Activated CD4-positive, alpha-beta T cell treated with anti-CD3 and anti-CD28 coated beads, Interleukin-2, amount 10 ng/mL, durations not matched to agents 24 days and 14 days (primary cell): ENCODE measurements at regions of chr3 and their contacts with region 1.

Region 1: DNA sequence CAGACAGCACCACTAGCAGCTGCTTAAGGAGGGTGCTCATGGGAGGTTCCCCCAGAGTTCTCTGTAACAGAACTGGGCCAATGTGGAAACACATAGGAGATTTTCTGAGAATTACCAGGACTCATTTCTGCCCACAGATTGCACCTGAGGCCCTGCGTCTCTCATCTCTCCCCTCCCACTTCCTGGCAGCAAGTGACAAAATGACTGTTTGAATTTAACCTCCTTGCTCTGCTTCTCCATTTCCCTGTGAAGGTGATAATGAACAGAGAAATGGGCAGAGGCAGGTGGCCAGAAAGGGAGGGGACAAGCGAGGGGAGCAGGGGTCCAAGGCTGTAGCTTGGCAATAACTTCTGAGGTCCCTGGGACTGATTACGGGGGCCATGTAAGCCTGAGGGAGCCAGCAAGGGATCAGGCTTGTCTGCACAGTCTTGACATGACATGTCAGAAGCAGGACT is 8.0 kb downstream of the EPHB1 start:
- DNase-seq: peak; percentile 85
- H3K4me3 Mint-ChIP-seq: peak overlapping the region; percentile 32
- H3K27ac Mint-ChIP-seq: peak overlapping the region; percentile 30
- H3K4me1 Mint-ChIP-seq: peaks cover 28% of the 10 kb centered on the region
- H3K27me3 Mint-ChIP-seq: peaks cover 38% of the 10 kb centered on the region

Region 2: DNA sequence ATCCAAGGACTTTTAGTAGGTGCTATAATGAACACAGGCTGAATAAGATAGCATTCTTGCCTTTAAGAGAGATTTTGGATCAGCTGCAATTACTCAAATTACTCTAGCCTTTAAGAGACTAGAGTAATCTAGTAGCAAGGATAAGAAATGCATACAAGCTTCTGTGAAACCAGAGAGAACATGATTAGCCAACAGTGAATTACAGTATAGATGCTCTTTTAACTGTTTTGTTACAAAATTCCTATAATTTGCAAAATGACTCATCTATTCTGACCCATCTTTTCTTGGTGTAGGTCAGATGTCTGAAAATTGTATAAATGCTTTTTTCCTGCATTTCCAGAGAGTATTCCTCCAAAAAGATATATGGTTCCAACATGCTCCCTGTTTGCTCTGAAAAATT is 250.3 kb before region 1 on chr3:
- intact Hi-C with region 1: no loop called
- DNase-seq: no peak
- H3K4me3 Mint-ChIP-seq: no peak overlapping the region
- H3K27ac Mint-ChIP-seq: no peak overlapping the region
- H3K4me1 Mint-ChIP-seq: no peaks in the 10 kb centered on the region
- H3K27me3 Mint-ChIP-seq: no peaks in the 10 kb centered on the region

Region 3: GRCh38 chr3:134904241-134904771 is 101.2 kb after region 1 on chr3:
- intact Hi-C with region 1: loop called (anchors 1 kb)
- DNase-seq: peak; percentile 64
- H3K4me3 Mint-ChIP-seq: no peak overlapping the region
- H3K27ac Mint-ChIP-seq: peak overlapping the region; percentile 66
- H3K4me1 Mint-ChIP-seq: peaks cover 11% of the 10 kb centered on the region
- H3K27me3 Mint-ChIP-seq: peaks cover 32% of the 10 kb centered on the region